ENCODE measurements at regions of chr17 and their contacts with region 1.

Region 1: DNA sequence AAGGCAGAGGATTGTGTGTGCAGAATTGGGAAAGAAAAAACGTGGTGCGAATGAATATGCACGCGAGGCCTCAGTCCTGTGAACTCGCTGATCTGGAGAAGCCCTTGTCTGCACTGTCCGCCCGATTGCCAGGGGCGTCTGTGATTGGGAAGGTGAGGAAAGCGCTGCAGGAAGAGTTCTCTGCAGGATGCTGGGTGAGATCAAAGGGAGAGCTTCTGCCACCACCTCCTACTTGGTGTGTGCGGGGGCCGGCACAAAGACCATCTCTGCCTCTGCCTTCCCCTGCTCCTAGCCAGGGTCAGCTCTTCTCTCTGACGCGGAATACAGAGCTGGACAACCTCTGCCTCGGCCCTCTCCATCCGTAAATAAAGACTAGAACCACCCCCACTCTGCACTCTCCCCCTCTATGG is 852 bp upstream of the RAB5C start:
- DNase-seq: no peak
- H3K4me3 ChIP-seq: peak overlapping the region; percentile 88 to 100 (median 96)
- H3K27ac ChIP-seq: peak overlapping the region in 2 of 4 donors; percentile 65 to 82
- H3K4me1 ChIP-seq: peaks cover 0 to 37% (median 33%) of the 10 kb centered on the region in 4 donors
- H3K27me3 ChIP-seq: no peaks in the 10 kb centered on the region
- CTCF ChIP-seq: no peak
- EP300 ChIP-seq: no peak
- POLR2A ChIP-seq: no peak

Region 2: DNA sequence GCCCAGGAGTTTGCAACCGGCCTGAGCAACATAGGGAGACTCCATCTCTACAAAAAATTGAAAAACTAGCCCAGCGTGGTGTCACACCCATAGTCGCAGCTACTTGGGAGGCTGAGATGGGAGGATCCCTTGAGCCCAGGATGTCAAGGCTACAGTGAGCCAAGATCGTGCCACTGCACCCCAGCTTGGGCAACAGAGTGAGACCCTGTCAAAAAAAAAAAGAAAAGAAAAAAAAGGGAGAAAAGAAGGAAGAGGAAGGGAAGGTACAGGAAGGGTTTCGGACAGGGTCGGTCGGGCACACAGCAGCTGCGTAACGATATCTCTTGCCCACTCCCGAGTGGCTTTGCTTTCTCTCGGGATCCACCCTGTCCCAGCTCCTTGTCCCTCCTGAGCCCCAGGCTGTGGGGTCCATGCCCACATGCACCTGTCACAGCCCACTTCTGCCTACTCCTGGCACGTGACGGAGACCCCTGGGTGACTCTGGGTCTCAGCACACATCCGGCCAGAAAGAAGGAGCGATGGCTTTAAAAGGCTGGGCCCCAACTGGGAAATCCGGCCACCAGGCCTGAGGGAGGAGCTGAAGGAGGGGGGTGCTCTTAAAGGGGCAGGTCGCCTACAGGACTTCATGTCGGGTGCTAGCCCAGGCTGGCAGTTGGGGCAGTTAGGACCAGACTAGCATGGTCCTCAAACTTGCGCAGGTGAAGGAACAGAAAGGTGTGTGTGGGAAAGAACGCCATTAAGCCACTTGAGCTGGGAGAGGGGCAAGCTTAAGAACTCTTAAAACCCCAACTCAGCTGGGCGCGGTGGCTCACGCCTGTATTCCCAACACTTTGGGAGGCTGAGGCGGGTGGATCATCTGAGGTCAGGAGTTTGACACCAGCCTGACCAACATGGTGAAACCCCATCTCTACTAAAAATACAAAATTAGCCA is 38.6 kb after region 1 on chr17 and contains the start of gene GHDC:
- intact Hi-C with region 1: loop called (anchors 5 kb)
- DNase-seq: peak; percentile 94
- H3K4me3 ChIP-seq: peak within 1 kb of the TSS; percentile 62 to 81 (median 64)
- H3K27ac ChIP-seq: peak within 1 kb of the TSS; percentile 81 to 86 (median 84)
- H3K4me1 ChIP-seq: peaks cover 0 to 26% (median 19%) of the 10 kb centered on the region in 4 donors
- H3K27me3 ChIP-seq: no peaks in the 10 kb centered on the region
- CTCF ChIP-seq: no peak
- EP300 ChIP-seq: no peak
- POLR2A ChIP-seq: no peak
- total RNA-seq, gene GHDC: 32.1 to 76.0 (median 42.4) TPM

Measured in sigmoid colon (tissue), 7 donors.